ENCODE measurements at regions of chr5 and their contacts with region 1.

Region 1: GRCh38 chr5:59660737-59661136 is 232.8 kb downstream of the PDE4D start:
- DNase-seq: no peak
- ATAC-seq: peak; percentile 39 to 63 (median 50)
- H3K4me3 ChIP-seq: no peak overlapping the region
- H3K27ac ChIP-seq: peak overlapping the region; percentile 73
- H3K4me1 ChIP-seq: peaks cover 58% of the 10 kb centered on the region
- H3K27me3 ChIP-seq: no peaks in the 10 kb centered on the region
- CTCF ChIP-seq: peak; percentile 46

Region 2: GRCh38 chr5:59587489-59588337 is 73.0 kb before region 1 on chr5:
- intact Hi-C with region 1: loop called (anchors 2 kb)
- DNase-seq: peak; percentile 78 to 90
- ATAC-seq: peak; percentile 81 to 89 (median 84)
- H3K4me3 ChIP-seq: peak overlapping the region; percentile 77
- H3K27ac ChIP-seq: peak overlapping the region; percentile 84
- H3K4me1 ChIP-seq: peaks cover 21% of the 10 kb centered on the region
- H3K27me3 ChIP-seq: no peaks in the 10 kb centered on the region
- CTCF ChIP-seq: peak; percentile 34

Region 3: DNA sequence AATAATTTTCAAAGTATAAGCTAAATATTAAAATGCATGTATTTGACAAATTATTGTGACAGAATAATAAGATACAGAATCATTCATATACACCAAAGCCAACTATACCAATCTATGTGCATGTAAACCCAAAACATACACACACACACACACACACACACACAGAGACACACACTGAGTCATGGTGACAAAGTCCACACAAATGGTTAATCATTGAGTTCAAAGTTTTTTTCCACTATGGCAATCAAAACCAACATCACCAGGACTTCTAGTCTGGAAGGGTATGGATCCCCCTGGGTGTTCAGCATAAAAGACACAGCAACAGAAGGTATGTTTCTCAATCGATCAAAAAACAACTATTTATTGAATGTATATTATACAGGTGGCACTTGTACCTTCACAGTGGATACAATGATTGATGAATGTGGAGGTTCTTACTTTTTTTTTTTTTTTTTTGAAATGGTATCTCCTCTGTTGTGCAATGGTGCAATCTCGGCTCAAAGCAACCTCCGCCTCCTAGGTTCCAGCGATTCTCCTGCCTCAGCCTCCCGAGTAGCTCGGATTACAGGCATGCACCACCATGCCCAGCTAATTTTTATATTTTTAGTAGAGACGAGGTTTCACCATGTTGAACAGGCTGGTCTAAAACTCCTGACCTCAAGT is 95.8 kb after region 1 on chr5:
- intact Hi-C with region 1: no loop called
- DNase-seq: no peak
- ATAC-seq: no peak
- H3K4me3 ChIP-seq: no peak overlapping the region
- H3K27ac ChIP-seq: no peak overlapping the region
- H3K4me1 ChIP-seq: no peaks in the 10 kb centered on the region
- H3K27me3 ChIP-seq: no peaks in the 10 kb centered on the region
- CTCF ChIP-seq: no peak

Measured in psoas muscle (tissue), 8 donors.